Aorta (tissue), 5 donors: ENCODE measurements at regions of chr19 and their contacts with region 1.

Region 1: DNA sequence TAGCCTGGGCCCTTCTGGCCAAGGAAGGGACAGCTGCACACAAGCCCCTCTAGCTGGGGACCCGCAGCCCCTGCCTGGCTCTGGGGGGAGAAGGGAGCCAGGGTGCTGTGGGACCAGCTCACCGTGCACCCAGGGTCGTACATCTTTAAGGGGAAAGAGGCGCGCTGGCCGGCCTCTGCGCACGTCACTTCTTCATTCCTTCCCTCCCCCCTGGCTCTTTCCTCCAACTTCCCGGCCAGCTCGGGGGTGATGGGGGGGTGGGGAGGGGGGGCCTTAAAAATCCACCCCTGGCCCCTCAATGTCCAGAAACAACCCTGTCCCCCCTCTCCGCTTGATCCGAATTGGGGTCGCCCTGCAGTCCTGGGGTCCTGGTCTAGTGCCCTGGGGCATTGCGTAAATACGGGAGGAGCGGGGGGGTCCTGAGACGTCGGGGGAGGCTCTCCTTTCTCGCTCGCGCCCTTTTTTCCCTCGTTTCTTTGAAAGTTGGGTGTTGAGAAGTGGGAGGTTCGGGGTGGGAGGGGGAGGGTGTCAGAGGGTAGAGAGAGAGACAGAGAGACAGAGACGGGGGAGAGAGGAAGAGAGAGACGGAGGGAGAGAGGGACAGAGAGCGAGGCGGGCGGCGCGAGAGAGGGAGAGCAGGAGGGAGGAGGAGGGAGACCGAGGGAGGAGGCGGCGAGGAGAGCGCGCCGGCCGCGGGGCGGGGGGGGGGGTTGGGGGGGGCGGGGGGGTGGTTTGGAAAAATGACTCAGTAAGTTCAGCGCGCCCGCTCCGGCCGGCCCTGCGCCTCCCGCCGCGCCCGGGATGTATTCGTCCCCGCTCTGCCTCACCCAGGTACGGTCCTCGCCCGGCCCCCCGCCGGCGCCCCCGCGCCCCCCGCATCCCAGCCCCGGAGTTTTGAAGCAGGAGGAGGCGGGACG is at the start of gene NFIC:
- DNase-seq: peak; percentile 89 to 92
- ATAC-seq: peak; percentile 80
- H3K4me3 ChIP-seq: peak within 1 kb of the TSS; percentile 92 to 96
- H3K27ac ChIP-seq: peak within 1 kb of the TSS; percentile 81
- H3K4me1 ChIP-seq: no peaks in the 10 kb centered on the region
- H3K27me3 ChIP-seq: no peaks in the 10 kb centered on the region
- total RNA-seq, gene NFIC: 175 to 188 TPM

Region 2: GRCh38 chr19:3403489-3404323 is 37.6 kb after region 1 on chr19:
- intact Hi-C with region 1: loop called (anchors 2 to 5 kb)
- DNase-seq: peak; percentile 93 to 97
- ATAC-seq: peak; percentile 87
- H3K4me3 ChIP-seq: peak overlapping the region in 1 of 2 donors; percentile 6
- H3K27ac ChIP-seq: peak overlapping the region; percentile 53 to 78
- H3K4me1 ChIP-seq: peaks cover 0 to 2% of the 10 kb centered on the region in 2 donors
- H3K27me3 ChIP-seq: no peaks in the 10 kb centered on the region

Region 3: DNA sequence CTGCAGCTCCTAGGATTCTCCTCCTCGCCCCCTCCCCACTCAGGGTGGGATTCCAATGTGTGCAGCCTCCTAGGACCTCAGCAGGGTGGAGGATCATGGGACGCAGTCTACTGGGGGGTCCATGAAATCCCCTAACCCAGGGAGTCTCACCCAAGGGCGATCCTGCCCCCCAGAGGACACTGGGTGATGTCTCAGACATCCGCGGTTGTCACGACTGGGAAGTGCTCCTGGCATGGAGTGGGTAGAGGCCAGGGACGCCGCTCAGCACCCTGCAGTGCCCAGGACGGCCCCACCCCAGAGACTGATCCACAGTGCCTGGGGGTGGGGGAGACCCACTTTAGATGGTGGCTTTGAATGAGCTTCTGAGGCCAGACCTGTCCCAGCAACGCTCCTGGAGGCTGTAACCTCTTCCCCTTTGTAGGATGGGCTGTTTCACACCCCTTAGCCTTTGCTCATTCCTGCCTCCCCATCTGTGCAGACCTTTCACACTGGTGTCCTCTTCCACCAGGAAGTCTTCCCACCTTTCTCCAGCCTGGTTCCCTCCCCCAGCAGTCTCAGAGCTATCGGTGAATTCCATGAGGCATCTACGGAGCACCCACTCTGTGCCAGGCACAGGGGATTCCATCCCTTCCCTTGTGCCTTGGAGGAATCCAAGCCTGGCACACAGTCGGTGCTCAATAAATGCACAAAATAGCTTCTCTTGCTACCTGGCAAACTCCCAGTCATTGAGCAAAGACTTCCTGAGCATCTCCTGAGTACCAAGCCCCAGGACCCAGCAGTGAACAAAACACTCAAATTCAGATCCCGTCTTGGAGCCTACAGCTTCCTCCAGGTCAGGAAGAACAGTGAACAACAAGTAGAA is 103.8 kb after region 1 on chr19:
- intact Hi-C with region 1: no loop called
- DNase-seq: no peak
- ATAC-seq: no peak
- H3K4me3 ChIP-seq: no peak overlapping the region
- H3K27ac ChIP-seq: no peak overlapping the region
- H3K4me1 ChIP-seq: no peaks in the 10 kb centered on the region
- H3K27me3 ChIP-seq: no peaks in the 10 kb centered on the region

Region 4: GRCh38 chr19:3482507-3483225 is 116.6 kb after region 1 on chr19:
- intact Hi-C with region 1: no loop called
- DNase-seq: no peak
- ATAC-seq: no peak
- H3K4me3 ChIP-seq: no peak overlapping the region
- H3K27ac ChIP-seq: no peak overlapping the region
- H3K4me1 ChIP-seq: no peaks in the 10 kb centered on the region
- H3K27me3 ChIP-seq: no peaks in the 10 kb centered on the region